Activated T-helper 2 cell treated with anti-CD3 and anti-CD28 coated beads, Interferon-gamma antibody, Interleukin-2, Interleukin-4, amounts not matched to agents 10 μg/mL and 5 μg/mL and 100 μg/mL, durations not matched to agents 14 hours and 24 hours and 36 hours (primary cell): ENCODE measurements at regions of chr17 and their contacts with region 1.

Region 1: GRCh38 chr17:72863526-72864211 is 228.8 kb downstream of the SLC39A11 start:
- DNase-seq: no peak
- H3K4me3 Mint-ChIP-seq: no peak overlapping the region
- H3K27ac Mint-ChIP-seq: peak overlapping the region; percentile 24
- H3K4me1 Mint-ChIP-seq: peaks cover 49% of the 10 kb centered on the region
- H3K27me3 Mint-ChIP-seq: no peaks in the 10 kb centered on the region

Region 2: GRCh38 chr17:72362376-72363088 is 501.1 kb before region 1 on chr17:
- intact Hi-C with region 1: no loop called
- DNase-seq: no peak
- H3K4me3 Mint-ChIP-seq: no peak overlapping the region
- H3K27ac Mint-ChIP-seq: no peak overlapping the region
- H3K4me1 Mint-ChIP-seq: no peaks in the 10 kb centered on the region
- H3K27me3 Mint-ChIP-seq: no peaks in the 10 kb centered on the region

Region 3: GRCh38 chr17:72839131-72839725 is 24.4 kb before region 1 on chr17:
- intact Hi-C with region 1: no loop called
- DNase-seq: no peak
- H3K4me3 Mint-ChIP-seq: no peak overlapping the region
- H3K27ac Mint-ChIP-seq: no peak overlapping the region
- H3K4me1 Mint-ChIP-seq: no peaks in the 10 kb centered on the region
- H3K27me3 Mint-ChIP-seq: no peaks in the 10 kb centered on the region

Region 4: GRCh38 chr17:72850410-72851118 is 13.1 kb before region 1 on chr17:
- intact Hi-C with region 1: no loop called
- DNase-seq: no peak
- H3K4me3 Mint-ChIP-seq: no peak overlapping the region
- H3K27ac Mint-ChIP-seq: no peak overlapping the region
- H3K4me1 Mint-ChIP-seq: peaks cover 2% of the 10 kb centered on the region
- H3K27me3 Mint-ChIP-seq: no peaks in the 10 kb centered on the region

Region 5: GRCh38 chr17:72997559-72997958 is 133.9 kb after region 1 on chr17:
- intact Hi-C with region 1: loop called (anchors 10 kb)
- DNase-seq: no peak
- H3K4me3 Mint-ChIP-seq: no peak overlapping the region
- H3K27ac Mint-ChIP-seq: no peak overlapping the region
- H3K4me1 Mint-ChIP-seq: peaks cover 12% of the 10 kb centered on the region
- H3K27me3 Mint-ChIP-seq: no peaks in the 10 kb centered on the region

Region 6: GRCh38 chr17:73166731-73167581 is 303.3 kb after region 1 on chr17:
- intact Hi-C with region 1: loop called (anchors 10 kb)
- DNase-seq: no peak
- H3K4me3 Mint-ChIP-seq: peak overlapping the region; percentile 34
- H3K27ac Mint-ChIP-seq: no peak overlapping the region
- H3K4me1 Mint-ChIP-seq: peaks cover 27% of the 10 kb centered on the region
- H3K27me3 Mint-ChIP-seq: peaks cover 64% of the 10 kb centered on the region